ENCODE measurements at regions of chrX and their contacts with region 1.

Region 1: GRCh38 chrX:68929332-68930150 is 100.7 kb downstream of the EFNB1 start:
- DNase-seq: peak; percentile 37 to 64
- ATAC-seq: peak; percentile 83 to 88
- H3K4me3 ChIP-seq: no peak overlapping the region
- H3K27ac ChIP-seq: peak overlapping the region; percentile 56 to 74 (median 68)
- H3K4me1 ChIP-seq: peaks cover 11 to 13% of the 10 kb centered on the region in 2 donors
- H3K27me3 ChIP-seq: no peaks in the 10 kb centered on the region
- CTCF ChIP-seq: no peak
- POLR2A ChIP-seq: no peak

Region 2: GRCh38 chrX:68894513-68895340 is 34.8 kb before region 1 on chrX:
- in situ Hi-C with region 1: no loop called
- intact Hi-C with region 1: loop called (anchors 2 kb)
- DNase-seq: peak; percentile 41 to 69
- ATAC-seq: peak; percentile 84 to 87
- H3K4me3 ChIP-seq: peak overlapping the region; percentile 46 to 51 (median 48)
- H3K27ac ChIP-seq: peak overlapping the region; percentile 88 to 92 (median 90)
- H3K4me1 ChIP-seq: peaks cover 12 to 15% of the 10 kb centered on the region in 2 donors
- H3K27me3 ChIP-seq: no peaks in the 10 kb centered on the region
- CTCF ChIP-seq: no peak
- POLR2A ChIP-seq: peak; percentile 47 to 76

Region 3: DNA sequence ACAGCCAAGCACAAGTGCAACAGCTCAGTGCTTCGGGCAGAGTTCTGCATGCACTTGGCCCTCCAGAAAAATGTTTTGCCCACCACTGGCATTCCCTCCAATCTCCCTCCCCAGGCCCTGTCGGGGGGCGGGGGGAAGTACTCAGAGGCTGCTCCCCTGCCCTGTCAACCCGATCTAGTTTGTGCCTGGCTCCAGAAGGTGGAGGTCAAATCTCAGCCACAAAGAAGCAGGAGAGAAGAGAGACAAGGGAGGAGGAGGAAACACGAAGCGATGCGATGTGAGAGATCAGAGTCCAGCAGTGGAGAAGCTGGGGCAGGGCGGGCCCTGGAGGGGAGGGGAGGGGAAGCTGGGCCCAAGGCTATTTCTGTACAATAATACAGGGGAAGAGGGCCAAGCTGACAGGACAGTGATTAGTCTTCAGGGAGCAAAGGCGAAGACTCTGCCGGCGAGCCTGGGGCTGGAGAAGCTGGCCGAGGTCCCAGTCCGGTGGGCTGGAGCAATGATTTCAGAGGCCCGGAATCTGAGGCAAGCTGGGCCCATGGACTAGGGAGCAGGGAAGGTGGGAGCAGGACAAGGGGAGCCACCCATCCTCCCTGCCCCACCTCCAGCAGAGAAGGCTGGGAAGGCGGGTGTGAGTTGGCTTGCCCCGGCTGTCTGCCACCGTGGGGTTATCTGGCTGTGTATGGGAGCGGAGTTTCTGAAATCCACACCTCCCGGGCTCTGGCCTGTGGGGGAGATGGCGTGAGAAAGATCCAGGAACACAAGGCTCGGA is 66.4 kb after region 1 on chrX:
- in situ Hi-C with region 1: no loop called
- intact Hi-C with region 1: loop called (anchors 5 kb)
- DNase-seq: peak in 1 of 2 donors; percentile 17
- ATAC-seq: peak; percentile 44 to 71
- H3K4me3 ChIP-seq: peak overlapping the region in 2 of 4 donors; percentile 11 to 22
- H3K27ac ChIP-seq: peak overlapping the region; percentile 52 to 64 (median 59)
- H3K4me1 ChIP-seq: peaks cover 3 to 17% of the 10 kb centered on the region in 2 donors
- H3K27me3 ChIP-seq: no peaks in the 10 kb centered on the region
- CTCF ChIP-seq: no peak
- POLR2A ChIP-seq: no peak

Region 4: GRCh38 chrX:70079870-70080269 is 1150.3 kb after region 1 on chrX:
- in situ Hi-C with region 1: no loop called
- intact Hi-C with region 1: no loop called
- DNase-seq: no peak
- ATAC-seq: no peak
- H3K4me3 ChIP-seq: no peak overlapping the region
- H3K27ac ChIP-seq: no peak overlapping the region
- H3K4me1 ChIP-seq: peaks cover 4 to 8% of the 10 kb centered on the region in 2 donors
- H3K27me3 ChIP-seq: no peaks in the 10 kb centered on the region
- CTCF ChIP-seq: no peak
- POLR2A ChIP-seq: no peak

Measured in gastrocnemius medialis (tissue), 4 donors.